GM12878 (cell line): ENCODE measurements at regions of chr2 and their contacts with region 1.

Region 1: DNA sequence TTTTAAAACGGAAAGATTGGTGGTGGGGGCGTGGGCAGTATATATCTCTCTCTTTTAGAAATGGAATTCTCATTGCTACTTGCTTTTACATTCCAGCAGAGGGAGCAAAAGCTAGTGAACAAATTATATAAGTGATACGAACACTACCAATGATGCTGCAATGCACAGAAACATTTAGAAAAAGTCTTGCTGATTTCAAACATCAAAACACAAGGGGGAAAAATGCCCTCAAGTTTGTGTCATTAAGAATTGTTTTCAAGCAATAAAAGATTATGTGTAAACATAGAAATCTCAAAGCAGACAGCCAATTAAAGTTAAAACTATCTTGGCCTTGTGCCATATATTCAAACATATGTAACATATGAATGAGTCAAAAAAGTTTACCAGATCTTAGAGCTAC is 296.3 kb upstream of the KCNJ3 start:
- DNase-seq: no peak
- ATAC-seq: peak; percentile 77
- H3K4me3 ChIP-seq: no peak overlapping the region
- H3K27ac ChIP-seq: no peak overlapping the region
- H3K4me1 ChIP-seq: no peaks in the 10 kb centered on the region
- H3K27me3 ChIP-seq: no peaks in the 10 kb centered on the region
- CTCF ChIP-seq: peak in 2 of 3 experiments; percentile 26 to 47; a peak in 3 of 6 replicates
- EP300 ChIP-seq: no peak
- POLR2A ChIP-seq: no peak
- RAD21 ChIP-seq: peak; percentile 28; the same call in 1 of the 2 replicates

Region 2: DNA sequence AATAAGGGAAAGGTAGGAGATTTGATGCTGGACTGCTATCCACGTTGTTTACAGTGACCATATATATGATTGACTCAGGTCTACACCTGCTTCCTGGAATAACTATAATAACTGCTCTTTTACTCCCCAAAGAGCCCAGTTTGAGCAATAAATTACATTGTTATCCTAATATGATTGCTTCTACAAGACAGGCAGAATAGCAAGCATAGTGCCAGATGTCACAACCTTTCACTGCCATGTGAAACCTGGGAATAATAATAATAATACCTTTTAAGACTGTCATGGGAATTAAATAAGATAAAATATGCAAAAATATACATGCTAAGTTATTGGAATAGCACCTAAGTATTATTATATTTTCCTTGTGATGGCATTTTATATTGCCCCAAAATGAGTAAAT is 231.8 kb before region 1 on chr2:
- CTCF ChIA-PET with region 1: no interaction called
- POLR2A ChIA-PET with region 1: no interaction called
- RAD21 ChIA-PET with region 1: no interaction called
- SMC1A ChIA-PET with region 1: no interaction called
- in situ Hi-C with region 1: no loop called
- intact Hi-C with region 1: no loop called
- DNase-seq: no peak
- ATAC-seq: no peak
- H3K4me3 ChIP-seq: no peak overlapping the region
- H3K27ac ChIP-seq: no peak overlapping the region
- H3K4me1 ChIP-seq: no peaks in the 10 kb centered on the region
- H3K27me3 ChIP-seq: no peaks in the 10 kb centered on the region
- CTCF ChIP-seq: no peak
- EP300 ChIP-seq: no peak
- POLR2A ChIP-seq: no peak
- RAD21 ChIP-seq: no peak

Region 3: GRCh38 chr2:154338352-154338967 is 63.8 kb before region 1 on chr2:
- CTCF ChIA-PET with region 1: no interaction called
- POLR2A ChIA-PET with region 1: no interaction called
- RAD21 ChIA-PET with region 1: no interaction called
- SMC1A ChIA-PET with region 1: no interaction called
- in situ Hi-C with region 1: no loop called
- intact Hi-C with region 1: no loop called
- DNase-seq: no peak
- ATAC-seq: no peak
- H3K4me3 ChIP-seq: no peak overlapping the region
- H3K27ac ChIP-seq: no peak overlapping the region
- H3K4me1 ChIP-seq: no peaks in the 10 kb centered on the region
- H3K27me3 ChIP-seq: no peaks in the 10 kb centered on the region
- CTCF ChIP-seq: no peak
- EP300 ChIP-seq: no peak
- POLR2A ChIP-seq: no peak
- RAD21 ChIP-seq: no peak

Region 4: DNA sequence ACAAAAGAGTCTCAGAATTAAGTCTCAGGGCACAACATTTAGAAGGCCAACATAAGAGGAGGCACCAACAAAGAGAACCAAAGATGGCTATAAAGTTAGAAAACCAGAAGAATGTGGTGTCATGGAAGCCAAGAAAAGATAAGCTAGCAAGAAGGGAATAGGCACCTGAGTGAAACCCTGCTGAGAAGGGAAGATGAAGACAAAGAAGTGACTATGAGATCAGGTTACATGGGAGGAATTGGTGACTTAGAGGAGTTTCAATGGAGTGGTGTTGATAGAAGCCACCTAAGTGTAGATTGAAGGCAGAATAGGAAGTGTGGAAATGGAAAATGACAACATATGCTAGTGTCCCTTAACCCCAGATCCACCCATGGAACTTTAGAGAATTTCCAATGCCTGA is 31.3 kb before region 1 on chr2:
- CTCF ChIA-PET with region 1: no interaction called
- POLR2A ChIA-PET with region 1: no interaction called
- RAD21 ChIA-PET with region 1: no interaction called
- SMC1A ChIA-PET with region 1: no interaction called
- in situ Hi-C with region 1: no loop called
- intact Hi-C with region 1: no loop called
- DNase-seq: no peak
- ATAC-seq: no peak
- H3K4me3 ChIP-seq: no peak overlapping the region
- H3K27ac ChIP-seq: no peak overlapping the region
- H3K4me1 ChIP-seq: no peaks in the 10 kb centered on the region
- H3K27me3 ChIP-seq: no peaks in the 10 kb centered on the region; a peak in 1 of 4 replicates
- CTCF ChIP-seq: no peak
- EP300 ChIP-seq: no peak
- POLR2A ChIP-seq: no peak
- RAD21 ChIP-seq: no peak

Region 5: GRCh38 chr2:155310589-155310988 is 908.4 kb after region 1 on chr2:
- CTCF ChIA-PET with region 1: interaction called, 4 read pairs
- POLR2A ChIA-PET with region 1: no interaction called
- RAD21 ChIA-PET with region 1: no interaction called
- SMC1A ChIA-PET with region 1: interaction called, 3 read pairs
- in situ Hi-C with region 1: no loop called
- intact Hi-C with region 1: loop called (anchors 2 kb)
- DNase-seq: no peak
- ATAC-seq: peak; percentile 67
- H3K4me3 ChIP-seq: no peak overlapping the region
- H3K27ac ChIP-seq: no peak overlapping the region
- H3K4me1 ChIP-seq: no peaks in the 10 kb centered on the region
- H3K27me3 ChIP-seq: no peaks in the 10 kb centered on the region
- CTCF ChIP-seq: peak; percentile 26 to 62 (median 48); a peak in 5 of 6 replicates
- EP300 ChIP-seq: no peak
- POLR2A ChIP-seq: no peak
- RAD21 ChIP-seq: peak; percentile 83

Region 6: GRCh38 chr2:155944218-155944617 is 1542.0 kb after region 1 on chr2:
- CTCF ChIA-PET with region 1: no interaction called
- POLR2A ChIA-PET with region 1: no interaction called
- RAD21 ChIA-PET with region 1: no interaction called
- SMC1A ChIA-PET with region 1: no interaction called
- in situ Hi-C with region 1: no loop called
- intact Hi-C with region 1: no loop called
- DNase-seq: no peak
- ATAC-seq: no peak
- H3K4me3 ChIP-seq: no peak overlapping the region
- H3K27ac ChIP-seq: no peak overlapping the region
- H3K4me1 ChIP-seq: no peaks in the 10 kb centered on the region
- H3K27me3 ChIP-seq: no peaks in the 10 kb centered on the region
- CTCF ChIP-seq: no peak
- EP300 ChIP-seq: no peak
- POLR2A ChIP-seq: no peak
- RAD21 ChIP-seq: no peak